Cardiac septum (tissue), 1 donor: ENCODE measurements at regions of chr17 and their contacts with region 1.

Region 1: DNA sequence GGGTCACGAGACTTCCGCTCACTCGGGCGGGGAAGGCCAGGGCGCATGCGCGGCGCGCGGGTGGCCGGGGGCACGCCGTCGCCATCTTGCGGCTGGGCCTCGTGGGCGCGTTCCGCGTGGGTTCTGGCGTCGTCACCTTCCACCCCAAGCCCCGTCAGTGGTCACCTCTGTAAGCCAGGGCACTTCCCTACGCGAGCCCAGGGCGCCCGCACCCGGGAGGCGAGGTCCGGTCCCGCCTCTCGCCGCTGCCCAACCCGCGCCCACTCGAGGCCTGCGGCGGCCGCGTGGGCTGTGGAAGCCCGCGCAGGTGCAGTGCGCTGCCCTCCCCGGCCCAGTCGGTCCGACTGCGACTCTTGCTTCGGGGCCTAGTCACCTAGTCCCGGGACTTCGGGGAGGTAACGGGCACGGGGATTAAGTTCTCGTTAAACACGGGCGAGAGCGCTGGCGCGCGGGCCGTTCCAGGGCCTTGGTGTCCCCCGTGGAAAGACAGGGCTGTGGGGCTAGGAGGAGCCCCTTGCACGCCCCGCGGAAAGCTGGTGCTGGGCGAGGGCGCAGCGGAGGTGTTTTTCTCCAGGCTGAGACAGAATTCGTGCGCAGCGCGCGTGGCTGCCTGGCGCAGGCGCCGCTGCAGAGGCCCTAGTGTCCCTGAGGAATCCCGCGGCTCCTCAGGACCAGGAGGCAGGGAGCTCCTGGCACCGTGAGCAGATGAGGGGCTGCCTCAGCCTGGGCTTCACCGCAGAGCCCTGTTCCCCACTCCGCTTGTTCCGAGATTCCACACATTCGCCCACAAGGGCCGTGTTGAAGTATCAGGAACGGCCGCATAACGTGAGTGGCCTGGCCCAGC is 472 bp upstream of the ARHGDIA start:
- DNase-seq: peak; percentile 97

Region 2: GRCh38 chr17:81833160-81833920 is 38.3 kb before region 1 on chr17 and contains the start of gene MCRIP1:
- intact Hi-C with region 1: loop called (anchors 5 kb)
- DNase-seq: peak; percentile 95
- total RNA-seq, gene MCRIP1: 102 TPM

Region 3: GRCh38 chr17:81927653-81928543 is 56.3 kb after region 1 on chr17 and contains the start of gene MAFG:
- intact Hi-C with region 1: loop called (anchors 5 kb)
- DNase-seq: peak; percentile 94
- total RNA-seq, gene MAFG: 24.4 TPM